Endothelial cell of umbilical vein (primary cell): ENCODE measurements at regions of chr1 and their contacts with region 1.

Region 1: DNA sequence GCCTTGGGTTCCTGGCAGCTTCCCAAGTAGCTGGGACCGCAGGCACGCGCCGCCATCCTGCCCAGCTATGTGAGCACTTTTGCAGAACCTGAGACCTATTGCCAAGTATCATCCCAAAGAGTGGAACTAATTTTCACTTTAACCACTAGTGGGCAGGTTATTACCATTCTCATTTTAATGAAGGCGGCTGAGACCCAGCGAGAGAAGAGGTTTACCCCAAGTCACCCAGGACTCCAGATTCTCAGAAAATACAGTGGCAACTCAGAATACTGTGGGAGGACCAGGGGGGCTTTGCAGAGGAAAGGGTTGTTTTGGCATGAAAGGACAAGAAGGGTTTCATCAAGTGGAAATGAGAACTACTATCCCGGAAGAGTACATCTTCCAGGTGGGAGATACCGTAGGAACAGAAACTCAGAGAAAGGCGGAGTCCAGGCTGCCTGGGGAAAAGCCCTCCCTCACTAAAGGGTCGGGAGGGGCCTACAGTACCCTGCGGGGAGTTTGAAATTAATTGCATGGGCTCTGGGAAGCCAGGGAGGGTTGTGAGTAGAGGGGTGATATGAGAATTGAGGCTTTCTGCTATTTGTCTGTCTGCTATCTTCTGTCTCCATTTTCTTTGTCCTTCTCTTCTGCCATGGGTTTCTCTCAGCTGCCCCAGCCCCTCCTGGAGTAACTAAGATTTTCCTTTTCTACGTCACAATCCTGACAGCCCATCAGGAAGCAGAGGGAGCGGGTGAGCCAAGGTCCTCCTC is 7.2 kb upstream of the SEMA4A start:
- DNase-seq: peak; percentile 92
- H3K4me3 ChIP-seq: peak overlapping the region in 1 of 3 experiments; percentile 5
- H3K27ac ChIP-seq: peak overlapping the region; percentile 18
- H3K4me1 ChIP-seq: peaks cover 24% of the 10 kb centered on the region
- H3K27me3 ChIP-seq: no peaks in the 10 kb centered on the region
- CTCF ChIP-seq: peak; percentile 63 to 67
- POLR2A ChIP-seq: no peak

Region 2: DNA sequence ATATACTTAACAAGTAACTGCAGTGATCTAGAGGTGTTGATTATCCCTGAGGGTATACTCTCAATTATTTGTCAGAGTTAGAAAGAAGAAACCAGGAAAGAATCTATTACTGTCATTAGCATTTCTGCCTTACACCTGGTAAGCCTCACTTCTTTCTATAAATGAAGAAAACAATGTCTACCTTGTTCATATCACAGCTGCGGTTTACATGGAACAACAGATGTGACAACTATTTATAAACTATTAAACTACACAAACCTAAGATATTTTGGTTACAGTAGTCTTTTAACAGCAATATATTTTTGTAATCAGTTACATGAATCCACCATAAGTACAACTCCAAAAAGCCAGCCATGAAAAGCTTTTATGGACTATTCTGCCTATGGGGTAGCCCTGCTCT is 329.8 kb before region 1 on chr1:
- CTCF ChIA-PET with region 1: no interaction called
- POLR2A ChIA-PET with region 1: no interaction called
- dilution Hi-C with region 1: no loop called
- intact Hi-C with region 1: no loop called
- DNase-seq: no peak
- H3K4me3 ChIP-seq: no peak overlapping the region
- H3K27ac ChIP-seq: no peak overlapping the region
- H3K4me1 ChIP-seq: no peaks in the 10 kb centered on the region
- H3K27me3 ChIP-seq: no peaks in the 10 kb centered on the region
- CTCF ChIP-seq: no peak
- POLR2A ChIP-seq: no peak

Region 3: DNA sequence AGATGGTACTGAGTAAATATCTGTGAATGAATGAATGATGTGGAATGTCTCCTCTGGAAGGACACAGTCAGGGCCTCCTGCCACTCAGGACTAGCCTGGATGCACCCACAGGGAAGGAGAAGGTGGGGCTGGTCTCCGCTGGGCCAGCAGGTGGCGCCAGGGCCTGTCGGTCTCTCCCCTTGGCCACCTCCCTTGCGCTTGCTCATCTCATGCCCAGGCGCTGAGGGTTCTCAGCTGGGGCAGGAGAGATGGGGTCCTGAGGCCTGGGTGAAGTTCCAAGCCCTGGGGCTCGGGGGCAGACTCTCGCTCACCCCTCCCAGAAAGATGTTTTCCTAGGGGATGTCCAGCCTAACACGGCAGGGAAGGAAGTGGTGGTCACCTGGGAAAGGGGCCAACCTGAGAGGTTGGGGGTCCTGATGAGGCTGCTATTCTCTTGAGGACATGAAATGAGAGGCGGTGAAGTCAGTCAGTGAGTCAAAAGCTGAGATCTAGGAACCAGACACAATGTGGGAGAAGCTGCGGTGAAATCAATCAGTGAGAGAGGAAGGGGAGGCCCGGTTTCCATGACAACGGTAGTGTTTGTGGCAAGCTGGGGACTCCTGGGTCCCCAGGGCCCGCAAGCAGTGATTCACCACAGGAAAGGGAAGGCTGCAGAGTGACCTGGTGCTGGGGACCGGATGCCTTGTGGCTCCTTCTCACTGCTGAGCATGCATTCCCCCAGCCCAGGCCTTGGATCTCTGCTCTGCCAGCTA is 49.4 kb before region 1 on chr1:
- CTCF ChIA-PET with region 1: interaction called, 18 read pairs
- POLR2A ChIA-PET with region 1: no interaction called
- dilution Hi-C with region 1: no loop called
- intact Hi-C with region 1: no loop called
- DNase-seq: peak; percentile 93
- H3K4me3 ChIP-seq: no peak overlapping the region
- H3K27ac ChIP-seq: peak overlapping the region; percentile 92
- H3K4me1 ChIP-seq: peaks cover 36% of the 10 kb centered on the region
- H3K27me3 ChIP-seq: no peaks in the 10 kb centered on the region
- CTCF ChIP-seq: peak; percentile 96 to 99
- POLR2A ChIP-seq: peak; percentile 65

Region 4: DNA sequence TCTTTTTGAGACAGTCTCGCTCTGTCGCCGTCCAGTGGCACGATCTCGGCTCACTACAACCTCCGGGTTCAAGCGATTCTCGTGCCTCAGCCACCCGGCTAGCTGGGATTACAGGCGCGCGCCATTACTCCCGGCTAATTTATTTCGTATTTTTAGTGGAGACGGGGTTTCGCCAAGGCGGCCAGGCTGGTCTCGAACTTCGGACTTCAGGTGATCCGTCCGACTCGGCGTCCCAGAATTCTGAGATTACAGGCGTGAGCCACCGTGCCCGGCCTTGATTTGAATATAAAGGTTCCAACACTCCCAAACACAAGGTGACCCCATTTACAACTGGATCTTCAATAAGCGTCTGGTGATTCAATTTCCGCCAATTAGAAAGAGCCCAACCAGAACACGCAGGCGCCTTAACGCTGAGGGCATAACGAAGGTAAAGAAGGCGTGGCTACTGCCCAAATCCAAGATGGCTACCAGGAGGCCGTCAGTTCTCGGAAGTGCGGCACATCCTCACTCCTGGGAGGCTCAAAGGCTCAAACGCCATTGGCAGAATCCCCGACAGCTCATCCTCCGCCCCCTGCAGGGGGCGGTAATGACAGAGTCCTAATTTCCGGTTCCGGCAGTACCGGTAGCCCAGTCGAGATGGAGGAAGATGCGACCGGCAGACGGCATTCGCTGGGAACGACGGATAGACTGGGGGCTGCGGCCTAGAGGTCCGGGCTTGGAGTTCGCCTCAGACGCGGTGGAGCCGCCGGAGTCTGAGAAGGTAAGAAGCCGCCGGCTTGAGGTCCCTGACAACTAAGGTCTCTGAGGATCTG is 47.5 kb after region 1 on chr1 and contains the start of gene SLC25A44:
- CTCF ChIA-PET with region 1: interaction called, 11 read pairs
- POLR2A ChIA-PET with region 1: no interaction called
- dilution Hi-C with region 1: no loop called
- intact Hi-C with region 1: loop called (anchors 1 kb)
- DNase-seq: peak; percentile 100
- H3K4me3 ChIP-seq: peak within 1 kb of the TSS; percentile 33 to 86 (median 64)
- H3K27ac ChIP-seq: peak within 1 kb of the TSS; percentile 86
- H3K4me1 ChIP-seq: peaks cover 9% of the 10 kb centered on the region
- H3K27me3 ChIP-seq: no peaks in the 10 kb centered on the region
- CTCF ChIP-seq: peak; percentile 27 to 53
- POLR2A ChIP-seq: peak; percentile 85
- total RNA-seq, gene SLC25A44: 24.0 and 26.3 TPM in 2 replicates

Region 5: GRCh38 chr1:156233426-156234127 is 87.4 kb after region 1 on chr1:
- CTCF ChIA-PET with region 1: interaction called, 489 read pairs
- POLR2A ChIA-PET with region 1: no interaction called
- dilution Hi-C with region 1: no loop called
- intact Hi-C with region 1: no loop called
- DNase-seq: no peak
- H3K4me3 ChIP-seq: no peak overlapping the region
- H3K27ac ChIP-seq: peak overlapping the region; percentile 60
- H3K4me1 ChIP-seq: peaks cover 12% of the 10 kb centered on the region
- H3K27me3 ChIP-seq: no peaks in the 10 kb centered on the region
- CTCF ChIP-seq: no peak
- POLR2A ChIP-seq: no peak

Region 6: DNA sequence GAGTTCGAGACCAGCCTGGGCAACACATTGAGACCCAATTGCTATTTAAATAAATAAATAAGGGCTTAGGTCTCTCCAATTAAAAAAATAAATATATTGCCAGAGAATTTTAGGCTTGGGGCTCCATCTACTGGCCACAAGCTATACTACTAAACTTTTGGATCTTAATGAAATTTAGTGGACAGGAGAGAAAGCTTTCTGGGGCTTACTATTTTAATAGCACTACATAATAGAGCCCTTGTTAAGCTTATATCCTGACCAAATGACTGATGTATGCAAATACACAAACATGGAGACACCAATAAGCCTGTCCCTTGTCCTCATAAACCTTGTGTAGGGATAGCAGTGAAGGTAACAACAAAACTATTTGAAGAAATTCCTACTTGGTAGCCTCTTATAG is 173.5 kb after region 1 on chr1:
- CTCF ChIA-PET with region 1: interaction called, 17 read pairs
- POLR2A ChIA-PET with region 1: no interaction called
- dilution Hi-C with region 1: no loop called
- intact Hi-C with region 1: loop called (anchors 1 kb)
- DNase-seq: peak; percentile 60
- H3K4me3 ChIP-seq: no peak overlapping the region
- H3K27ac ChIP-seq: no peak overlapping the region
- H3K4me1 ChIP-seq: peaks cover 2% of the 10 kb centered on the region
- H3K27me3 ChIP-seq: no peaks in the 10 kb centered on the region
- CTCF ChIP-seq: peak; percentile 31 to 47
- POLR2A ChIP-seq: no peak